ENCODE measurements at regions of chr11 and their contacts with region 1.

Region 1: GRCh38 chr11:6362873-6363678 is 27.2 kb upstream of the SMPD1 start:
- DNase-seq: peak; percentile 74
- H3K4me3 ChIP-seq: no peak overlapping the region; a peak in 1 of 4 replicates
- H3K27ac ChIP-seq: no peak overlapping the region
- H3K4me1 ChIP-seq: no peaks in the 10 kb centered on the region
- H3K27me3 ChIP-seq: no peaks in the 10 kb centered on the region; the same call in 1 of the 2 replicates
- CTCF ChIP-seq: peak; percentile 89
- EP300 ChIP-seq: no peak
- RAD21 ChIP-seq: peak; percentile 77

Region 2: DNA sequence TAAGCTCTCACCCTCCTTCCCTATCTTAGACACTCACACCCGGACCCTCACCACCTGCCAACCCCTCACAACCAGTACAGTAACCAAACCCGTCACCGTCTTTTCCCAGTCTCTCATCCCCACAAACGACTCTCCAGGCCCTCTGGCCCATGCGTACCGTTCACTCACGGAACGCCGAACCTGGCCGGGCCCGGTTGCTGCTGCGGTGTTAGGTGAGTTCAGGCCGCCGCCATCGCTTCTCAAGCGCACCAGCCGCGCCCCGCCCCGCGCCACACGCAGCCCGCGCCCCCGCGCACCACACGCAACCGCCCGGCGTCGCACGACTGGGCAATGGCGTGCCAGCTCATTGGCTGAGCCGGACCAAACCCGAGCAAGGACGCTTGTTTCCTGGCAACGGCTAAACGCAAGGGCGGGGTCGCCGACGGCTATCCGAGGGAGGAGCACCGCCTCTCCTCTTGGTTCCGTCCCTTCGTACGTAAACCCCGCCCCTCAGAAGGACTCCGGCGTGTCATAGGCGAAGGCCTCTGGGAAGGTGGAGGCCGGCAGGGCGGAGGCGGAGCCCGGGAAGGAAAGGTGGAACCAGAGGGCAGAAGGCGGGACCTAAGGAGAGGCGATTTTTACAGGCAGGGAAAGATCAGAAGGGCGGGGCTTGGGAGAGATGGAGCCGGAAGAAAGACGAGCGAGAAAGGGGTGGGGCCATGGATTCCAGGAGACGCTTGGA is 128.5 kb before region 1 on chr11 and contains the start of gene FHIP1B:
- CTCF ChIA-PET with region 1: interaction called, 14 read pairs
- POLR2A ChIA-PET with region 1: no interaction called
- DNase-seq: peak; percentile 95
- H3K4me3 ChIP-seq: peak within 1 kb of the TSS; percentile 67 to 90
- H3K27ac ChIP-seq: peak within 1 kb of the TSS; percentile 69 to 79
- H3K4me1 ChIP-seq: peaks cover 0 to 8% of the 10 kb centered on the region in 2 experiments; a peak in 1 of 4 replicates
- H3K27me3 ChIP-seq: peaks cover 12% of the 10 kb centered on the region
- CTCF ChIP-seq: no peak
- EP300 ChIP-seq: no peak
- RAD21 ChIP-seq: no peak
- polyA plus RNA-seq, gene FHIP1B: 26.3 and 38.2 TPM in 2 replicates

Region 3: DNA sequence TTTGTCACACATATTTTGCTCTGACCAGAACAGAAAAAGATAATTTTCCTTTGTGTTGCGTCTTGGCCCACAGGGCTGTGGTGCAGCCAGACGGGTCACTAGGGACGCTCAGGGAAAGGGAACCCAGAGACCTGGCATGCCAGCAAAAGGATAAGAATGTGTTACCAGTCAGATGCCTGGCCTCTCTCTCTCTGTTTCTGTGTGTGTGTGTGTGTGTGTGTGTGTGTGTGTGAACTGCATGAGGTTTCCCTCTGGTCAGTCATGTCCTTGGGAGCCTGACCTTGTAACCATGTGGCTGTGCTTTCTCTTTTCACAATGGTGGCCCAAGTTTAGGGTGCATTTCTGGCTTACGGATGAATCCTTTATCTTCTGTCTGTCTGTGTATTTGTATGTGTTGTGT is 78.1 kb before region 1 on chr11:
- CTCF ChIA-PET with region 1: interaction called, 11 read pairs
- POLR2A ChIA-PET with region 1: no interaction called
- DNase-seq: no peak
- H3K4me3 ChIP-seq: no peak overlapping the region
- H3K27ac ChIP-seq: no peak overlapping the region
- H3K4me1 ChIP-seq: no peaks in the 10 kb centered on the region
- H3K27me3 ChIP-seq: peaks cover 37% of the 10 kb centered on the region; the same call in 1 of the 2 replicates
- CTCF ChIP-seq: no peak
- EP300 ChIP-seq: no peak
- RAD21 ChIP-seq: no peak

Region 4: GRCh38 chr11:6315811-6316425 is 47.2 kb before region 1 on chr11:
- CTCF ChIA-PET with region 1: interaction called, 20 read pairs
- POLR2A ChIA-PET with region 1: no interaction called
- DNase-seq: peak; percentile 79
- H3K4me3 ChIP-seq: no peak overlapping the region
- H3K27ac ChIP-seq: no peak overlapping the region
- H3K4me1 ChIP-seq: no peaks in the 10 kb centered on the region; a peak in 1 of 4 replicates
- H3K27me3 ChIP-seq: peaks cover 5% of the 10 kb centered on the region; the same call in 1 of the 2 replicates
- CTCF ChIP-seq: peak; percentile 80
- EP300 ChIP-seq: no peak
- RAD21 ChIP-seq: peak; percentile 77

Region 5: GRCh38 chr11:6345366-6345765 is 17.7 kb before region 1 on chr11:
- CTCF ChIA-PET with region 1: interaction called, 114 read pairs
- POLR2A ChIA-PET with region 1: no interaction called
- DNase-seq: no peak
- H3K4me3 ChIP-seq: no peak overlapping the region
- H3K27ac ChIP-seq: no peak overlapping the region
- H3K4me1 ChIP-seq: no peaks in the 10 kb centered on the region
- H3K27me3 ChIP-seq: peaks cover 19% of the 10 kb centered on the region; the same call in 1 of the 2 replicates
- CTCF ChIP-seq: no peak
- EP300 ChIP-seq: no peak
- RAD21 ChIP-seq: no peak

Region 6: GRCh38 chr11:6443269-6444003 is 80.4 kb after region 1 on chr11:
- CTCF ChIA-PET with region 1: interaction called, 17 read pairs
- POLR2A ChIA-PET with region 1: no interaction called
- DNase-seq: peak; percentile 78
- H3K4me3 ChIP-seq: no peak overlapping the region
- H3K27ac ChIP-seq: no peak overlapping the region
- H3K4me1 ChIP-seq: peaks cover 0 to 18% of the 10 kb centered on the region in 2 experiments; a peak in 1 of 4 replicates
- H3K27me3 ChIP-seq: no peaks in the 10 kb centered on the region
- CTCF ChIP-seq: peak; percentile 77
- EP300 ChIP-seq: no peak
- RAD21 ChIP-seq: peak; percentile 73

Region 7: GRCh38 chr11:7703740-7704139 is 1340.7 kb after region 1 on chr11:
- CTCF ChIA-PET with region 1: no interaction called
- POLR2A ChIA-PET with region 1: no interaction called
- DNase-seq: no peak
- H3K4me3 ChIP-seq: no peak overlapping the region
- H3K27ac ChIP-seq: no peak overlapping the region
- H3K4me1 ChIP-seq: no peaks in the 10 kb centered on the region
- H3K27me3 ChIP-seq: peaks cover 5% of the 10 kb centered on the region; the same call in 1 of the 2 replicates
- CTCF ChIP-seq: no peak
- EP300 ChIP-seq: no peak
- RAD21 ChIP-seq: no peak

Measured in SK-N-SH (cell line).